Heart right ventricle (tissue), 16 donors: ENCODE measurements at regions of chr5 and their contacts with region 1.

Region 1: DNA sequence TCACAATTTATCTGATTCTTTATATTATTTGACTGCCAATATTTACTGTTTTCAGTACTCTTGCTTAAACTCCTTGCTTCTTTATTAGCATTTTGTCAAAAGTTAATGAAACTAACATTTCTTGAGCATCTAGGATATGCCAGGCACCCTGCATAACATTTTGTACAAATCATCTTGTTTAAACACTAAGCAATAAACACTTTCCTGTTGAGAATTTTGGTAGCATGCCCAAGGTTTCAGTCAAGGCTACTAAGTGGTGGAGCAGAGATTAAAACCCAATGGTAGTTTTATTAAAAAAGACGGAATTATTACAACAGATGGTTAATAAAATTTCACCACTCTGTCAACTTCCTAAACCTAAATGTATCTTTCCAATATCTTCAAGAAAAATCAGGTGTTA is 43.2 kb downstream of the SKIC3 start:
- DNase-seq: no peak
- ATAC-seq: no peak
- H3K4me3 ChIP-seq: no peak overlapping the region
- H3K27ac ChIP-seq: no peak overlapping the region
- H3K4me1 ChIP-seq: no peaks in the 10 kb centered on the region
- H3K27me3 ChIP-seq: no peaks in the 10 kb centered on the region
- CTCF ChIP-seq: no peak

Region 2: GRCh38 chr5:95549030-95549429 is 37.4 kb after region 1 on chr5:
- intact Hi-C with region 1: loop called in 1 of 10 experiments (anchors 5 kb)
- DNase-seq: no peak
- ATAC-seq: no peak
- H3K4me3 ChIP-seq: no peak overlapping the region
- H3K27ac ChIP-seq: no peak overlapping the region
- H3K4me1 ChIP-seq: peaks cover 0 to 37% (median 18%) of the 10 kb centered on the region in 9 donors
- H3K27me3 ChIP-seq: no peaks in the 10 kb centered on the region
- CTCF ChIP-seq: no peak